HepG2 (cell line): ENCODE measurements at regions of chr2 and their contacts with region 1.

Region 1: DNA sequence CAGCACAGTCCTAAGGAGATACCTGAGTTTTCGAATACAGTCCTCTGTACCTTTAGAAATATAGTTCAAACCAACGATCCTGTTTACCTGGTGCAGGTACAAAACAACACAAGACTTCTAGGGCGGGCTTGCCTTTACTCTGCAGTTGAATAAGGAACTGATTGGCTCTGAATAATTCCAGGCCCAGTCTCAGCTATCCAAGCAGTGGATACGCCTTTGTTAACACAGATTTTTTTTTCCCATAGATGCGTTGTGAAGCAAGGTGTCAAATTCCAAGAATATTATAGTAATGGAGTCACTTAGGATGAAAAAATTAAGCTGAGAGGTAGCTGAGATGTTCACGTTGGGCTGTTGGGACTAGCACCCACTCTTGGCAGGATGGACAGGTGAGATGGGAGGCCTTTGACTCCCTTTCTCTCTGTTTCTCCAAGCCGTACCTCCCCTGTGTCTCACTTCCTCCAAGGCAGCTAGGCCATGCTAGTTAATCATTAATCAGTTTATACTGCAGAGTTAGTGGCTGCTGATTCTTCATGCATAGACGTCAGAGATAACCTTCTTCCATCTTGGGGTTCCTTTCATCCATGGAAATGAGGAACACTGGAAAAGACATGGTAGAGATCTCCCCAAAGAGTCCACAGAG is 380.8 kb upstream of the ACVR2A start:
- DNase-seq: peak; percentile 15
- ATAC-seq: peak; percentile 81
- H3K4me3 ChIP-seq: no peak overlapping the region
- H3K27ac ChIP-seq: no peak overlapping the region
- H3K4me1 ChIP-seq: 0 out of 2 replicates have a peak, but pooled peaks cover 11% of the 10 kb centered on the region
- H3K27me3 ChIP-seq: no peaks in the 10 kb centered on the region; a peak in 1 of 5 replicates
- CTCF ChIP-seq: no peak
- EP300 ChIP-seq: no peak
- POLR2A ChIP-seq: no peak
- RAD21 ChIP-seq: no peak

Region 2: GRCh38 chr2:147305496-147305895 is 158.5 kb before region 1 on chr2:
- CTCF ChIA-PET with region 1: no interaction called
- POLR2A ChIA-PET with region 1: no interaction called
- in situ Hi-C with region 1: no loop called
- intact Hi-C with region 1: loop called (anchors 5 kb)
- DNase-seq: no peak
- ATAC-seq: no peak
- H3K4me3 ChIP-seq: no peak overlapping the region
- H3K27ac ChIP-seq: no peak overlapping the region
- H3K4me1 ChIP-seq: no peaks in the 10 kb centered on the region
- H3K27me3 ChIP-seq: no peaks in the 10 kb centered on the region
- CTCF ChIP-seq: no peak
- EP300 ChIP-seq: no peak
- POLR2A ChIP-seq: no peak
- RAD21 ChIP-seq: no peak

Region 3: DNA sequence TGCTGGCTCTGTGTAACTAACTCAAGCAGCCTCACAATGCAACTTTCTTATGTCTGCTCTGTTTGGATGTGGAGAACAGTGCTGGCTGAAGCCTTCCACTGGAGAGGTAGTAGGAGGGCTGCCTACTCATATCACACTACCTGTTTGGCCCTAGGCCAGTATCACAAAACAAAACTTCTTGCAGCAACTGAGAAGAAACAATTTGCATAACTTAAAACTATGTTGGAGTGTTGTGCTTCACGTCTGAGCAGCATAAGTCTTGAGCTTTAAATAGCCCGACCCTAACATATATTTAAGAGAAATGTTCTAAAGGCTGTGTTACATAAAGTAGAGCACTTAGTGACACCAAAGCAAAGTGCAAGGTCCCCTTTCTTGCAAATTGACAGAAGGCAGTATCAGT is 175.9 kb after region 1 on chr2:
- CTCF ChIA-PET with region 1: no interaction called
- POLR2A ChIA-PET with region 1: no interaction called
- in situ Hi-C with region 1: no loop called
- intact Hi-C with region 1: no loop called
- DNase-seq: no peak
- ATAC-seq: no peak
- H3K4me3 ChIP-seq: no peak overlapping the region
- H3K27ac ChIP-seq: no peak overlapping the region
- H3K4me1 ChIP-seq: no peaks in the 10 kb centered on the region
- H3K27me3 ChIP-seq: no peaks in the 10 kb centered on the region
- CTCF ChIP-seq: no peak
- EP300 ChIP-seq: no peak
- POLR2A ChIP-seq: no peak
- RAD21 ChIP-seq: no peak